Calu3 (cell line): ENCODE measurements at regions of chr12 and their contacts with region 1.

Region 1: DNA sequence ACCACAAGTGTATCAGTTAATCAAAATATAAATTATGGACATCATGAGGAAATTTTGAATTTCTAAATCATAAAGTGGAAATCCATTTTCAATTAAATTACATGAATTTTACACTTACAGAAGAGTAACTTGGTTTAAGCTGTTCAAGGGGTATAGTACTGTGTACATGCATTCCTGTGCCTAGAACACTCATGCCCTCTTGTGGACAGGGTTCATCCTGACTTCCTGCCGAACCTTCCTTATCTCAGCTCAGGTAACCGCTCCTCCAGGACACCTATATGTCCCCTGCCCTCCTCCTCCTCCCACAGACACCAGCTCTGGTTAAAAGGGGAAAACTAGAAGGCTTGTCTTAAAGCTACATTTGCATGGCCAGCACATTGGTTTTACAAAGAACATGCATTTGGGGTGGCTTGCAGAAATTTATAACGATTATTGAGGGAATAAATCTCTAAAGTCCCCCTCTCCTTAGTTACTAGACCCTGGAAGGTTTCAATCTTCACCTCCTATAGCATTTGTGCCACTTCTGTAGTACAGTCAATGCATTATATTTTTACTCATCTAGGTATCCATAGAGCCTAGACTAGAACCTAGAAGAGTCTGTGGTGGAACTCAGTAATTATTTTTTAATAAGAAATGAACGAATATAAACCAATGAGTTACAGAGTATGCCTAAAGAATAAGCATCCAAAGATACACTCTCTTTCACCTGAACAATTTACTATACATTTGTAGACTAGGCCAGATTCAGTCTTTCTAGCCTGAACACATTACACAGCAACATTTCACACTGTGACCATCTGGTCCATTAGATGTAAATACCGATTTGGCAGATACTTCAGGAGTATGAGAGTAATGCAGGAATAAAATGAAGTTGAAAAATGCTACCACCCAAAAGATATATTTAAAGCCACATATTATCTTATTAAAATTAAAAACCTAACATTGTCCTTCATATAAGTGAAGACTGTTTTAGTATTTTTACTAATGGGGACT is 345.6 kb downstream of the PAWR start:
- DNase-seq: peak; percentile 74
- H3K4me3 Mint-ChIP-seq: no peak overlapping the region
- H3K27ac Mint-ChIP-seq: no peak overlapping the region
- H3K4me1 Mint-ChIP-seq: no peaks in the 10 kb centered on the region
- H3K27me3 Mint-ChIP-seq: peaks cover 16% of the 10 kb centered on the region
- CTCF ChIP-seq: peak; percentile 70

Region 2: GRCh38 chr12:78181544-78182162 is 1163.5 kb before region 1 on chr12:
- CTCF ChIA-PET with region 1: interaction called, 8 read pairs
- intact Hi-C with region 1: loop called (anchors 1 kb)
- DNase-seq: peak; percentile 51
- H3K4me3 Mint-ChIP-seq: no peak overlapping the region
- H3K27ac Mint-ChIP-seq: no peak overlapping the region
- H3K4me1 Mint-ChIP-seq: peaks cover 8% of the 10 kb centered on the region
- H3K27me3 Mint-ChIP-seq: no peaks in the 10 kb centered on the region
- CTCF ChIP-seq: peak; percentile 50

Region 3: DNA sequence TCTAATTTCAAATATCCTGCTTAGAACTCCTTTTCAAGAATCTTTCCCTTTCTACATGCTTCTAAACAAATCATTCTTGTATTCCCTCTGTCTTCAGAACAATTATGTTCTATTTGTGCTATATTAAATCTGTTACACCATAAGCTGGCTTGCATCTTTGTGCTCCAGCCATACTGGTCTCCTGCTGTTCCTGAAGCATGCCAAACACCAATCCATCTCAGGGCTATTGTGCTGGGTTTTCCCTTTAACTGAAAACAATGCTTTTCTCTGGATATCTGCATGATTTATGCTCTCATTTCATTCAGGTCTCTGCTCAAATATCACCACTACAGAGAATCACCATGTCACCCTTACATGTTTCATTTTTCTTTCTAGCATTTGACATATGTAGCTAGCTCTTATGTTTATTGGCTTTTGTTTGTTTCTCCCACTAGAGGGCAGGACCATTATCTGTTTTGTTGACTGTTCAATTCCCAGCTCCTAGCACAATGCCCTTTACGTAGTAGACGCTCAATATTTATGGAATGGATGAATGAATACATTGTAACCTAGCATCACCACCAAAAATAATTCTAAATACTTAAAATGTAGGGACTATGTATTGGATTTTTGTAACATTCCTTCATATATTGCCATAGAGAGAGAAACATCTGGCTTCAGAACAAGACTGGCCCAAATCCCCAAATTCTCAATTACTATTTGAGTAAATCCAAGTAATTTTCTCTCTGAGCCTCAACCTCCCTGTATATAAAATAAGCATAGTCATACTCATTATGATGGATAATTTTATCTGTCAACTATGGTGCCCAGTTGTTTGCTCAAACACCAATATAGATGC is 782.6 kb before region 1 on chr12:
- CTCF ChIA-PET with region 1: no interaction called
- intact Hi-C with region 1: loop called (anchors 10 kb)
- DNase-seq: no peak
- H3K4me3 Mint-ChIP-seq: no peak overlapping the region
- H3K27ac Mint-ChIP-seq: no peak overlapping the region
- H3K4me1 Mint-ChIP-seq: peaks cover 18% of the 10 kb centered on the region
- H3K27me3 Mint-ChIP-seq: no peaks in the 10 kb centered on the region
- CTCF ChIP-seq: peak; percentile 28

Region 4: DNA sequence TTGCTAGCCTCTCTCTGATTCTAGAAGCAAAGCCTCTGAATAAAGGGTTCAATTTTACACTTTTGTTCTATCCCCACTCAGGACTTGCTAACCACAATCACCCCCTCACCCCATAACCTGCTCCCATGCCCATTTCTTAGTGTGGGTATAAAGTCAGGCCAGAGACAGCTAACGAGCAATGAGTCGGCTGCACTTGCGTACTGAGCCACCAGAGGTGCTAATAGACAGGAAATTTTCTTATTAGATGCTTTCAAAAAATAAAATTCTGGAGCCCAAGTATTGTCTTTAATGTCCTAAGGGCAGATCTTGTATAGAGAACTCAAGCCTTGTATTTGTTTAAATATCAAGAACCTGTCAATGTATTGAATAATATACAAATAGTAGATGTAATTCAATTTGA is 223.7 kb before region 1 on chr12:
- CTCF ChIA-PET with region 1: interaction called, 5 read pairs
- intact Hi-C with region 1: loop called (anchors 2 kb)
- DNase-seq: peak; percentile 14
- H3K4me3 Mint-ChIP-seq: no peak overlapping the region
- H3K27ac Mint-ChIP-seq: no peak overlapping the region
- H3K4me1 Mint-ChIP-seq: peaks cover 11% of the 10 kb centered on the region
- H3K27me3 Mint-ChIP-seq: no peaks in the 10 kb centered on the region
- CTCF ChIP-seq: peak; percentile 45